Cardiac septum (tissue), 1 donor: ENCODE measurements at regions of chr4 and their contacts with region 1.

Region 1: GRCh38 chr4:931960-932712 is at the starts of genes GAK and TMEM175:
- DNase-seq: peak; percentile 97
- total RNA-seq, gene GAK: 36.1 TPM
- total RNA-seq, gene TMEM175: 22.7 TPM

Region 2: GRCh38 chr4:781493-782216 is 150.5 kb before region 1 on chr4:
- intact Hi-C with region 1: loop called (anchors 5 kb)
- DNase-seq: peak; percentile 99

Region 3: GRCh38 chr4:856225-856901 is 75.8 kb before region 1 on chr4:
- intact Hi-C with region 1: no loop called
- DNase-seq: no peak

Region 4: GRCh38 chr4:973431-974397 is 41.6 kb after region 1 on chr4 and contains the start of gene DGKQ:
- intact Hi-C with region 1: loop called (anchors 5 kb)
- DNase-seq: peak; percentile 96
- total RNA-seq, gene DGKQ: 5.2 TPM

Region 5: DNA sequence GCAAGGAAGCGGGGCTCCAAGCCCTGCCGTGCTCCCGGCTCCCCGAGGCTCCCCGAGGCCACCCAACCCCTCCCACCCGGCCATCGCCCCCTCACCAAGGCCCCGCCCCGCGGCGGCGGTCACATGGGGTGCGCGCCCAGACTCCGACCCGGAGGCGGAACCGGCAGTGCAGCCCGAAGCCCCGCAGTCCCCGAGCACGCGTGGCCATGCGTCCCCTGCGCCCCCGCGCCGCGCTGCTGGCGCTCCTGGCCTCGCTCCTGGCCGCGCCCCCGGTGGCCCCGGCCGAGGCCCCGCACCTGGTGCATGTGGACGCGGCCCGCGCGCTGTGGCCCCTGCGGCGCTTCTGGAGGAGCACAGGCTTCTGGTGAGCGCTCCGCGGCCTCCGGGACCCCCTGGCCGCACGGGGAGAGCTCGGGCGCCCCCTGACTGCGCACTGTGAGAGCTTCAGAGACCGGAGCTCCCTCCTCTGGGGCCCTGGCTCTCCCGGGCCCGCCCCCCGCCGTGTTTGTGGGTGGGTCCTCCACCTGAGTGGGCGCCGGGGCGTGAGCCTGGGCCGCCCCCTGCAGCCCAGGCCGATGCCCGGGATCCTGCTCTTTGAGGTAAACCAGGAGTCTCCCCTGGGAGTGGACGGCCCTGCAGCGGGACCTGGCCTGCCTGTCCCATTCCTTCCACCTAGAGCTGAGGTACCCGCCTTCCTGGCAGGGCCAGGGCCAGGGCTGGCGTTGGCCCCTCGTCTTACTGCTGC is 54.9 kb after region 1 on chr4 and contains the start of gene IDUA:
- intact Hi-C with region 1: loop called (anchors 2 kb)
- DNase-seq: peak; percentile 92
- total RNA-seq, gene IDUA: 12.9 TPM

Region 6: DNA sequence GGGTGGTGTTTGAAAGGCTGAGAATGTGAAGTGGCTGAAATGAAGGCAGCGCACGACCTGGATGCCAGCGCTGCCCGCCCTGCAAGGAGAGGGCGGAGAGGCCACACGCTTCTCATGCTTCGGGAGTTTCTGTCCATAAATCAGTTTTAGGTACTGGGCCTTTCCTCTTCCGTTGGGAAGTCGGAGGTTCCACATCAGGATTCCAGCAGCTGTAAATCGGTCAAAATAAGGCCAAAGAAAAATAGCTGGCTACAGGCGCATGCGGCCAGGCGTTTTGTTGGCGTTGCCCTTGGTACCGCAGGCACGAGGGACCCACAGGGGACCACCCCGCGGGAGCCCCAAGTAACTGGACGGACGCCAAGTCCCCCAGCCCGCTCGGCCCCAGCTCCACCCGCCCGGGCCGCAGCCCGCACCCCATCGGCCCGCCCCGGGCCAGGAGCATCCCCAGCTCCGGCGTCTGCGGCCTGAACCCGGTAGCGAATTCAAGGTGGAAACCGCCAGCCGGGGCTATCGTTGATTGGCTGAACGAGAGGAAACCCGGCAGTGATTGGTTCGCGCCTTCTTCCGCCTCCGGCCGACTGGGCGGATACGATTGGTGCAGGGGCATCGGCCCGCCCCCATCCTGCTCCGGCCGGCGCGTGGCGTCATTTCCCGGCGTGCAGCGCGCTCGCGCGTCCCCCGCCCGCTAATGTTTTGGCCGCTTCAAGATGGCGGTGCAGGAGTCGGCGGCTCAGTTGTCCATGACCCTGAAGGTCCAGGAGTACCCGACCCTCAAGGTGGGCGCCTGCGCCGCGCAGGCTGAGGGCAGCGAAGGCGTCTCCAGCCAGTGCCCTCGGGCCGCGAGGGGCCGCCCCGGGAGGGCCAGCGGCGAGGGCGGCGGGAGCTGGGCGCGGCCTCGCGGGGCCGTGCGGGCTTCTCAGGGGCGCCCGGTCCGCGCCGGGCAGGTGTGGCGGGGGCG is 357.4 kb after region 1 on chr4 and contains the start of gene MAEA:
- intact Hi-C with region 1: loop called (anchors 10 kb)
- DNase-seq: peak; percentile 99
- total RNA-seq, gene MAEA: 55.2 TPM